RWPE1 (cell line): ENCODE measurements at regions of chr12 and their contacts with region 1.

Region 1: DNA sequence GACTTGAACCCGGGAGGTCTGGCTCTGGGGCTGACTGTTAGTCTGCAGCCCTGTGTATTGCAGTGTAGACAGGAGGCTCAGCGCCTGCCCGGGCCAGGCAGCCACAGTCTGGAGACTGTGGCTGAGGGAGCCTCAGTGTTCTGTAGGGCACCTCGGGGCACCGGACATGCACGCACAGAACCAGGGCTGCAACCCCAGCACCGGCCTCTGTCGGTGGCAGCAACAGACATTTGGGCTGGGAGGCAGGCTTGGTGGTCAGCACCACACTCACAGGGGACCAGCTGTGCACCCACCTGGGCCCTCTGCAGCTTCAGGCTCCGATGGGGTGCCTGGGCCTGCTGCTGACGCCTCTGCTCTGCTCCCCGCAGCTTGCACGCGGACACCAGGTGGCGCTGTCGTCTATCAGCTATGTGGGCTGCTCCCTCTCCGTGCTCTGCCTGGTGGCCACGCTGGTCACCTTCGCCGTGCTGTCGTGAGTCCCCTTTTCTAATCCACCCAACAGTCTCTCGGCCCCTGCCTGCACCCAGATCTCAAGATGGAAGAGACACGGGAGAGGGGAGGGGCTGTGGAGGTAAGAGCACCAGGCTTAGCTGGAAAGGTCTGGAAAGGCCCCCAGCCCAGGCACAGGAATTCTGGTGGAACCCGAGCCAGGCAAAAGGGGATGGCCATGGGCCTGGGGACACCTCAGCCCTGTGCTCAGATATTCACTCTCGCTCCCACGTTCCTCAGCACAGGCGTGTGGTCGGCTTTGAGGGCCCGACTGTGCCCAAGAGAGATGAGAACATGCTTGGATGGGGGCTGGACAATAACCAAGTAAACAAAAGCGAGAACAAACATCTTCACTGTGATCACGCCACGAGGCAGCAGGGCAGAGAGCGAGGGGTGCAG is 151.0 kb downstream of the ADGRD1 start:
- DNase-seq: peak; percentile 40
- H3K27ac ChIP-seq: no peak overlapping the region
- CTCF ChIP-seq: peak; percentile 82

Region 2: DNA sequence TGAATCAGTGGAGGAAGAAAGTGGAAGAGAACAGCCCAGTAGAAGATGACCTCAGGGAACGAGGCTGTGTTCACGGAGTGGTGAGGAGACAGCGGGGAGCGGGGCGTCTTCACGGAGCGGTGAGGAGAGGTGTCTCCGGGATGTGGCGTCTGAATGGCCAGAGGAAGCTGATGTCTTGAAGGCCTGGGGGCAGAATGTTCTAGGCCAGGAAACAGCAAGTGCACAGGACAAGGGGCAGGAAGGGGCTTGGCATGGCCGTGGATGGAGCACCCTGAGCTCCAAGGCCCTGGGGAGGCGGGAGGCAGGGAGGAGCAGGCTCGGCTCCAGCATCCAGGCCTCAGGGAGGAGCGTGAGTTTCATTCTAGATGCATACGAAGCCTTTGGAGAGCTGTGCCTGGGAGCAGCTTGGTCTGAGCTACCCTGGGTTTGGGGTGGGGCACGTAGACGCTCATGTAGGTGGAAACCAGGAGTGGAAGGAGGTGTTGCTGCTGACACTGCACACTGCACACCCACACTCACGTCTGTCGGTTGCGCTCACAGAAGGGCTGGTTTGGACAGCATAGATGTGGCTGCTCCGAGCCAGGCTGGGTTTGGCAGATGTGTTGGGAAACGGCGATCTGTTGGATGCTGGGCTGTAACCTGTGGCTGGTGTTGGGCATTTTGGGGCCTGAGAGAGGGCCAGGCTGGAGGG is 19.4 kb before region 1 on chr12:
- CTCF ChIA-PET with region 1: no interaction called
- POLR2A ChIA-PET with region 1: no interaction called
- DNase-seq: no peak
- H3K27ac ChIP-seq: no peak overlapping the region
- CTCF ChIP-seq: no peak

Region 3: GRCh38 chr12:131132118-131132892 is 27.6 kb after region 1 on chr12:
- CTCF ChIA-PET with region 1: interaction called, 31 read pairs
- POLR2A ChIA-PET with region 1: no interaction called
- DNase-seq: peak; percentile 29
- H3K27ac ChIP-seq: no peak overlapping the region
- CTCF ChIP-seq: peak; percentile 45

Region 4: DNA sequence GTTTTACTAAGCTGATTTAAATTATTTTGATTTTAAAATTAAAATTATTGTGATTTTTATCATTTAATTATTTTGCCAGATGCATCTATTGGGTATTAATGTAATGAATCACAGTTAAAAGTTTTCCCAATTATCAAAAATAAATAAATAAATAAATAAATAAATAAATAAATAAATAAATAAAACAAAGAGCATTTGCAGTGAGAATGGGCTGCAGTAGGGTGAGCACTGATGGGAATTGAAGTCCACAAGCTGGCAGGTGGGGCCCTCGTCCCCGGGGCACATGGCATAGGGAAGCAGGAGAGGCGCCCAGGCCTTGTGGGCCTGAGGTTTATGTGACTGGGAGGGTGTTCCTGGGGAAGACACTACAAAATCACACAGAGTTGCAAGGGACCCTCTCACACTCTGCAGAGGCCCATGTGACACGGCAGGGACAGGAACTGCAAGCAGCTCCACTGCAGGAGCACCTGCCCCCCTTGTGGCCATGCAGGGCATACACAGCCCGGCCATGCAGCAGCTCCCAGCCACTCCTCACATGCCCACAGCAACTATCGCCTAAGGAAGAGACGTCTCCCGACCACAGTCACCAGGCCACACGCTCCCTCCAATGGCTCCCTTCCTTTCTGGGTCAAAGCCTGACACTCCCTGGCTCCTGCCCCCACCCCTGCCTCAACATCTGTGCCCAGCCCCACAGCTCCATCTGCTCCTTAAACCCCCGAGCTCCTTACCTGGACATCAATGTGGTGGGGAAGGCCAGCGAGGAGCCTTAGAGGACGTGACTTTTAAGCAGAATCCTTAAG is 349.9 kb after region 1 on chr12:
- CTCF ChIA-PET with region 1: interaction called, 16 read pairs
- POLR2A ChIA-PET with region 1: no interaction called
- DNase-seq: peak; percentile 54
- H3K27ac ChIP-seq: no peak overlapping the region
- CTCF ChIP-seq: peak; percentile 33

Region 5: DNA sequence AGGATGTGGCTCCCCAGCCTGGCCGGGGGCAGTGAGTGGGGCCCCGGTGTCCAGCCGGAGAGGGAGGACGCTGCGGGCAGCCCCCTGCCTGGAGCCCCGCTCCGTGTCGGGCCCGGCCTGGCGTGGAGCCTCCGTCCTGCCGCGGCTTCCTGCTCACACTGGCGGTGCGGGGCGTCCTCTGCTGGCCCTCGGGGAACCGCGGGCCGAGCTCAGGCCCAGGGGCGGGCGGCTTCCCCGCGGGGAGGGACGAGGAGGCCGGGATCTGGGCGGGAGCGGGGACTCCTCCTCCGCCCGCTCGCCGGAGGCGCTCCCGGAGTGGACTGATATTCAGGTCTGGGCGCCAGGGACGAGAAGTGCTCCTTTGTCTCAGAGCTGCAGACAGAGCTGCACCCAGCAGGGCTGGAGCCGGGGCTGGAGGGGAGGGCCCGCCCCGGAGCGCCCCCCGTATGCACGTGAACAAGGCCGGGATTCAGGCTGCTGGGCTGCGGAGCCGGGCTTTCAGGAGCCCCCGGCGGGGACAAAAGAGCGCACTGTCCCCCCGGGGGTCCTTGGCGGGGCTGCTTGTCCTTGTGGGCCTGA is 725.7 kb after region 1 on chr12:
- CTCF ChIA-PET with region 1: interaction called, 23 read pairs
- POLR2A ChIA-PET with region 1: no interaction called
- DNase-seq: peak; percentile 63
- H3K27ac ChIP-seq: peak overlapping the region; percentile 60
- CTCF ChIP-seq: peak; percentile 77